Sciatic nerve (tissue), 2 donors: ENCODE measurements at regions of chr3 and their contacts with region 1.

Region 1: GRCh38 chr3:55485211-55485791 is 1.8 kb downstream of the WNT5A start:
- DNase-seq: peak; percentile 86
- ATAC-seq: peak; percentile 81

Region 2: DNA sequence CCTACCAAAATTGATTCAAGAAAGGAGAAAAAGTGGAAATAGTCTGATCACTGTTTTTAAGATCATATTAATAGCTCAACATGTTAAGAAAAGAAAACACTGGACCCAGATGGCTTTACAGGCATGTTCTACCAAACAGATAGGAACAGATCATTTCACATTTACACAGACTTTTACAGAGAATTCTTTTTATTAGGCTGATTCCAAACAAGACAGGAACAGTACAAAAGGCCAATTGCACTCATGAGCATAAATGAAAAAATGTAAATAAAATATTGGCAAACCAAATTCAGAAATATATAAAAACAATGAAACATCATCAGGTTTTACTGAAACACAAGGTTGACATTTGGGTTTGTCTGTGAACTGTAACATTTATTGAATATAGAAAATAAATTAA is 104.7 kb before region 1 on chr3:
- intact Hi-C with region 1: no loop called
- DNase-seq: no peak
- ATAC-seq: no peak

Region 3: DNA sequence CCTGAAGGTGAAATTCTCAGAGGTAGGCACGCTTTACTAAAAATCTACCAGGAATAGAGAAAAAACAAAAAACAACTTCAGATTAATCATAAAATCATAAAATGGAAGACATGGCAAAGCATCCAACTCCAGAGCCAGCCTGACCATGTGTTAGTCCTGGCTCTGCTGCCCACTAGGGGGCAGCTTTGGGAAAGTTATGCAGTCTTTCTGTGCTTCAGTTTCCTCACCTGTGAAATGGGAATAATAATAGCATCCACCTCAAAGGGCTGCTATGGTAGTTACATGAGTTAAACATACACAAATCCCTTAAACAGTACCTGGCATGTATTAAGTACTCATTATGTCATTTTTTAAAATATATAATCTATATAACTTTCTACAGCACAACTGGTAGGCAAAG is 50.5 kb before region 1 on chr3:
- intact Hi-C with region 1: no loop called
- DNase-seq: no peak
- ATAC-seq: no peak

Region 4: GRCh38 chr3:55746808-55747413 is 261.6 kb after region 1 on chr3:
- intact Hi-C with region 1: loop called (anchors 10 kb)
- DNase-seq: no peak
- ATAC-seq: no peak

Region 5: GRCh38 chr3:56251343-56251945 is 766.1 kb after region 1 on chr3:
- intact Hi-C with region 1: loop called (anchors 10 kb)
- DNase-seq: peak; percentile 62
- ATAC-seq: peak; percentile 62